Heart right ventricle (tissue), 16 donors: ENCODE measurements at regions of chr13 and their contacts with region 1.

Region 1: DNA sequence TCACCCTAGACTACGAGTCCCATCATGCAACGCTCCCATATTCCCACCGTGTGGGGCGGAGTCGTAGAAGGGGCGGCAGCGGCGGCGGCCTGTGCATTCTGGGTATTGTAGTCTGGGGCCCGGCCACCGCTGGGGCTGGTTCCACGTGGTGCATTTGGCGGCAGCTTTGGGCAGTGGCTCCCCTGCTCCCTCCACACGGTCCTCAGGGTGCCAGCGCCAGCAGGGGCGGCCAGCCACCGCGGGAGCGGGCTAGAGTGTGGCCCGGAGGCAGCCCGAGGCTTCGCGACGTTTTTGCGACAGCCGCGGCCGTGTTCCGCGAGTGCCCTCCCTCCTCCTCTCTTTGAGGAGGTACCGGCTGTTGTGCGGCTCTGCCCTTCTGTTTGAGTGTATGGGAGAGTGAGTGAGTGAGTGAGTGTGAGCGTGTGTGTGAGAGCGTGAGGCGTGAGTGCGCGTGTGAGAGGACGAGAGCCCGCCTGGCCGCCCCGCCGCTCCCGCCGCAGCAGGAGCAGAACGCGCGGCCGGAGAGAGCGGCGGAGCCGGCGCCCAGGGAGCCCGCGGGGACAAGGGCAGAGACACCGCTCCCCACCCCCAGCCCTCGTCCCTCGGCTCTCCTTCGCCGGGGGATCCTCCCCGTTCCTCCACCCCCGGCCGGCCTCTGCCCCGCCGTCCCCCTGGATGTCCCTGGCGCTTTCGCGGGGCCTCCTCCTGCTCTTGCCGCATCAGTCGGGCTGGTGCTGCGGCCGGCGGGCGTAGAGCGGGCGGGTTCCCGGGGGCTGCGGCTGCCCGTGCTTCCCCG is at the start of gene CDK8:
- DNase-seq: peak; percentile 92 to 94
- ATAC-seq: peak; percentile 94 to 98 (median 97)
- H3K4me3 ChIP-seq: peak within 1 kb of the TSS; percentile 74 to 98 (median 88)
- H3K27ac ChIP-seq: peak within 1 kb of the TSS; percentile 70 to 98 (median 94)
- H3K4me1 ChIP-seq: peaks cover 0 to 35% (median 25%) of the 10 kb centered on the region in 9 donors
- H3K27me3 ChIP-seq: no peaks in the 10 kb centered on the region
- CTCF ChIP-seq: peak in 1 of 9 donors; percentile 18
- total RNA-seq, gene CDK8: 6.4 to 11.0 (median 9.2) TPM

Region 2: GRCh38 chr13:26074706-26075105 is 179.3 kb before region 1 on chr13:
- intact Hi-C with region 1: no loop called
- DNase-seq: no peak
- ATAC-seq: no peak
- H3K4me3 ChIP-seq: no peak overlapping the region
- H3K27ac ChIP-seq: no peak overlapping the region
- H3K4me1 ChIP-seq: no peaks in the 10 kb centered on the region
- H3K27me3 ChIP-seq: peaks cover 0 to 31% (median 22%) of the 10 kb centered on the region in 7 donors
- CTCF ChIP-seq: peak in 1 of 9 donors; percentile 14

Region 3: GRCh38 chr13:26221721-26222519 is 32.1 kb before region 1 on chr13 and contains the start of gene RNF6:
- intact Hi-C with region 1: loop called in 1 of 10 experiments (anchors 1 kb)
- DNase-seq: peak; percentile 85 to 97
- ATAC-seq: peak; percentile 99
- H3K4me3 ChIP-seq: peak within 1 kb of the TSS; percentile 66 to 99 (median 92)
- H3K27ac ChIP-seq: peak within 1 kb of the TSS; percentile 92 to 99 (median 96)
- H3K4me1 ChIP-seq: peaks cover 3 to 31% (median 27%) of the 10 kb centered on the region in 9 donors
- H3K27me3 ChIP-seq: no peaks in the 10 kb centered on the region
- CTCF ChIP-seq: peak in 2 of 9 donors; percentile 14 to 15
- total RNA-seq, gene RNF6: 17.2 to 26.6 (median 24.5) TPM

Region 4: DNA sequence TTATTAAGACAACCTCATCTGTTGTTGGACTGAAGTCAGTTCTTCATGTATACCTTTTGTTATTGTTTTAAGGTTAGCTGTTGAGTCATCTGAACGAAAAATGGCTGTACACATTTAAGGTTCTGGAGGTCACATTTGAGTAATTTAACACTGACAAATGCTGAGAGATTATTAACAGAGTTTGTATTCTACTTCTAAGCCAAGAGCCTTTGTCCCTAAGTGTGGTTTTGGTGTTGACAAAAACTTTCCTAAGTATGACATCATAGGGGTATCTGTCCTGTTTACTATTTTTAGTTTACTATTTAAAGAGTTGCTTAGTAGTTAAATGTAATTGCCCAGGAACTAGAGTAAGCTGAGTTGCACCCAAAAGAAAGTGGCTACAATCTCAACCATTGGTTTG is 71.9 kb after region 1 on chr13:
- intact Hi-C with region 1: loop called in 2 of 10 experiments (anchors 10 kb)
- DNase-seq: no peak
- ATAC-seq: peak in 7 of 8 donors; percentile 34 to 80 (median 75)
- H3K4me3 ChIP-seq: no peak overlapping the region
- H3K27ac ChIP-seq: peak overlapping the region in 5 of 10 donors; percentile 27 to 61 (median 28)
- H3K4me1 ChIP-seq: peaks cover 3 to 53% (median 39%) of the 10 kb centered on the region in 9 donors
- H3K27me3 ChIP-seq: no peaks in the 10 kb centered on the region
- CTCF ChIP-seq: no peak

Region 5: GRCh38 chr13:26476111-26476781 is 222.3 kb after region 1 on chr13:
- intact Hi-C with region 1: loop called in 2 of 10 experiments (anchors 5 to 10 kb)
- DNase-seq: peak in 1 of 2 donors; percentile 35
- ATAC-seq: peak; percentile 78 to 87 (median 82)
- H3K4me3 ChIP-seq: peak overlapping the region in 8 of 10 donors; percentile 13 to 49 (median 34)
- H3K27ac ChIP-seq: peak overlapping the region in 9 of 10 donors; percentile 59 to 93 (median 68)
- H3K4me1 ChIP-seq: peaks cover 0 to 28% (median 11%) of the 10 kb centered on the region in 9 donors
- H3K27me3 ChIP-seq: no peaks in the 10 kb centered on the region
- CTCF ChIP-seq: no peak

Region 6: DNA sequence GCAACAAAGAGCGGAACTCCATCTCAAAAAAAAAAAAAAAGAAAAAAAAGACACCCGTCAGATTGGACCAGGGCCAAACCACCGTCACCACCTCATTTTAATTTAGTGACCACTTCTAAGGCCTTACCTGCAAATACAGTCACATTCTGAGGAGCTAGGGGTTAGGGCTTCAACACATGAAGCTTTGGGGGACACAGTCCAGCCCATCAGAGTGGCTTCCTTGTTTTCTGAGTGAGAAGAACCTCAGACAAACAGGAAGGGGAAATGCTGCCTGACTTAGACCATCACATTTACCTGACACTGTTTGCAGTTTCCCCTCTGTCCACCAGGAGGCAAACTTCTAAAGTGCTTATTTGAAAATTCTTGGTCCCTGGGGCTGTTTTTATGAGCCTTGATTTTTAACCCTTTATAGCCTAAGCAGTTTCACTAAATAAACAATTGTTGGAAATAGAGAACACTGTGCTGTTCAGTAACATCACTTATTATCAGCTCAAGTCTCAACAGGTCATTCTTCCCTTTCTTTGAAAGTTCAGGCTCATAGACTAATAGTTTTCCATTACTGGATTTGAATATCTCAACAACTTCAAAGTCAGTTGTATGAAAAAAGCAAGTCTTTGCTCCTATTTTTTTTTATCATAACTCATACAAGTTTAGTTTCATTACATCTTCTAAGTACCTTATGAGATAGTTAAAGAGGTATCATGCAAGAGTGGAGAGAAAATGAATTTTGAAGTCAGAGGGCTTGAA is 228.6 kb after region 1 on chr13:
- intact Hi-C with region 1: loop called in 2 of 10 experiments (anchors 5 to 10 kb)
- DNase-seq: peak in 1 of 2 donors; percentile 62
- ATAC-seq: peak in 3 of 8 donors; percentile 39 to 50 (median 46)
- H3K4me3 ChIP-seq: no peak overlapping the region
- H3K27ac ChIP-seq: peak overlapping the region in 1 of 10 donors; percentile 27
- H3K4me1 ChIP-seq: peaks cover 0 to 14% (median 3%) of the 10 kb centered on the region in 9 donors
- H3K27me3 ChIP-seq: no peaks in the 10 kb centered on the region
- CTCF ChIP-seq: peak; percentile 75 to 92 (median 87)

Region 7: GRCh38 chr13:26502826-26503225 is 248.8 kb after region 1 on chr13:
- intact Hi-C with region 1: loop called in 1 of 10 experiments (anchors 10 kb)
- DNase-seq: no peak
- ATAC-seq: peak; percentile 16 to 80 (median 45)
- H3K4me3 ChIP-seq: no peak overlapping the region
- H3K27ac ChIP-seq: no peak overlapping the region
- H3K4me1 ChIP-seq: peaks cover 0 to 7% (median 0%) of the 10 kb centered on the region in 9 donors
- H3K27me3 ChIP-seq: peaks cover 0 to 8% (median 3%) of the 10 kb centered on the region in 7 donors
- CTCF ChIP-seq: peak in 1 of 9 donors; percentile 20

Region 8: DNA sequence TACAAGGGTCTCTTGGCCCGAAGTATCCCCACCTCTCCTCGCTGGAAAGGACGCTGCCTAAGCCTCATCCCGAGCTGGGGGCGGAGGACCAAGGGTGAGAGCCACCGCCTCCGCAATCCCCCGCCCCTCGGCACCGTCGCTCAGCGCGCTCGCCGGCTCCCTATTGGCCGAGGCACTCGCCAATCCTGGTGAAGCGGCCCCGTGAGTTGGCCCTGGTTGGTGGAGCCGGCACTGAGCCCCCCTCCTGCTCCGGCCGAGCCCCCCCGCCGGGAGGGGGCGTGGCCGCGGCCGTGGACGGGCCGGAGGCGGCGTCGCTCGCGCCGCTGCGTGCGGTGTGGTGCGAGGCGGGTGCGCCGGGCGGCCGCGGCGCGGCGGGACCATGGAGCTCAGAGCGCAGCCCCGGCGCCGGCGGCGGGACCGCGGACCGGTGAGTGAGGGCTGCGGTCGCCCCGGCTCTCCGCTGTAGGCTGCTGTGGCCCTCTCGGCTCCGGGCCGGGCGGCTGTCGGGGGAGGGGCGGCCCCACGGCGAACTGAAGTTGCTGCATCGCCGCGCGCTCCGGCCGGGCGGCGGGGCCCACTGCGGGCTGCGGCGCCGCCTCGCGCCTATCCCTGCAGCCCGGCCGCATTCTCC is 303.5 kb after region 1 on chr13 and contains the start of gene WASF3:
- intact Hi-C with region 1: loop called in 1 of 10 experiments (anchors 5 kb)
- DNase-seq: peak; percentile 95 to 96
- ATAC-seq: peak; percentile 99 to 100 (median 100)
- H3K4me3 ChIP-seq: peak within 1 kb of the TSS; percentile 58 to 93 (median 74)
- H3K27ac ChIP-seq: peak within 1 kb of the TSS in 8 of 10 donors; percentile 23 to 75 (median 54)
- H3K4me1 ChIP-seq: peaks cover 0 to 23% (median 7%) of the 10 kb centered on the region in 9 donors
- H3K27me3 ChIP-seq: peaks cover 0 to 47% (median 4%) of the 10 kb centered on the region in 7 donors
- CTCF ChIP-seq: no peak
- total RNA-seq, gene WASF3: 6.8 to 13.6 (median 9.1) TPM

Region 9: GRCh38 chr13:26584713-26585112 is 330.7 kb after region 1 on chr13:
- intact Hi-C with region 1: no loop called
- DNase-seq: no peak
- ATAC-seq: no peak
- H3K4me3 ChIP-seq: no peak overlapping the region
- H3K27ac ChIP-seq: no peak overlapping the region
- H3K4me1 ChIP-seq: peaks cover 0 to 6% (median 0%) of the 10 kb centered on the region in 9 donors
- H3K27me3 ChIP-seq: no peaks in the 10 kb centered on the region
- CTCF ChIP-seq: no peak

Region 10: GRCh38 chr13:27293873-27294515 is 1040.0 kb after region 1 on chr13:
- intact Hi-C with region 1: no loop called
- DNase-seq: no peak
- ATAC-seq: peak in 1 of 8 donors; percentile 27
- H3K4me3 ChIP-seq: no peak overlapping the region
- H3K27ac ChIP-seq: no peak overlapping the region
- H3K4me1 ChIP-seq: peaks cover 0 to 6% (median 0%) of the 10 kb centered on the region in 9 donors
- H3K27me3 ChIP-seq: peaks cover 0 to 10% (median 0%) of the 10 kb centered on the region in 7 donors
- CTCF ChIP-seq: no peak